ENCODE measurements at regions of chr14 and their contacts with region 1.

Region 1: GRCh38 chr14:32252030-32252670 is 49.1 kb upstream of the RNU6-8 start:
- DNase-seq: peak; percentile 53
- H3K4me3 ChIP-seq: no peak overlapping the region
- H3K27ac ChIP-seq: peak overlapping the region in 2 of 4 donors; percentile 26 to 42
- H3K4me1 ChIP-seq: peaks cover 0 to 18% (median 2%) of the 10 kb centered on the region in 4 donors
- H3K27me3 ChIP-seq: no peaks in the 10 kb centered on the region
- CTCF ChIP-seq: peak; percentile 81 to 90 (median 84)
- EP300 ChIP-seq: no peak
- POLR2A ChIP-seq: no peak

Region 2: GRCh38 chr14:31419967-31420318 is 832.2 kb before region 1 on chr14:
- in situ Hi-C with region 1: no loop called
- intact Hi-C with region 1: loop called (anchors 10 kb)
- DNase-seq: peak; percentile 84
- H3K4me3 ChIP-seq: peak overlapping the region; percentile 46 to 98 (median 90)
- H3K27ac ChIP-seq: peak overlapping the region; percentile 91 to 97 (median 94)
- H3K4me1 ChIP-seq: peaks cover 9 to 35% (median 17%) of the 10 kb centered on the region in 4 donors
- H3K27me3 ChIP-seq: no peaks in the 10 kb centered on the region
- CTCF ChIP-seq: no peak
- EP300 ChIP-seq: no peak
- POLR2A ChIP-seq: no peak

Region 3: GRCh38 chr14:31510222-31510621 is 741.9 kb before region 1 on chr14:
- in situ Hi-C with region 1: loop called (anchors 10 kb)
- intact Hi-C with region 1: no loop called
- DNase-seq: no peak
- H3K4me3 ChIP-seq: no peak overlapping the region
- H3K27ac ChIP-seq: no peak overlapping the region
- H3K4me1 ChIP-seq: no peaks in the 10 kb centered on the region
- H3K27me3 ChIP-seq: no peaks in the 10 kb centered on the region
- CTCF ChIP-seq: peak; percentile 62 to 78 (median 68)
- EP300 ChIP-seq: no peak
- POLR2A ChIP-seq: no peak

Region 4: DNA sequence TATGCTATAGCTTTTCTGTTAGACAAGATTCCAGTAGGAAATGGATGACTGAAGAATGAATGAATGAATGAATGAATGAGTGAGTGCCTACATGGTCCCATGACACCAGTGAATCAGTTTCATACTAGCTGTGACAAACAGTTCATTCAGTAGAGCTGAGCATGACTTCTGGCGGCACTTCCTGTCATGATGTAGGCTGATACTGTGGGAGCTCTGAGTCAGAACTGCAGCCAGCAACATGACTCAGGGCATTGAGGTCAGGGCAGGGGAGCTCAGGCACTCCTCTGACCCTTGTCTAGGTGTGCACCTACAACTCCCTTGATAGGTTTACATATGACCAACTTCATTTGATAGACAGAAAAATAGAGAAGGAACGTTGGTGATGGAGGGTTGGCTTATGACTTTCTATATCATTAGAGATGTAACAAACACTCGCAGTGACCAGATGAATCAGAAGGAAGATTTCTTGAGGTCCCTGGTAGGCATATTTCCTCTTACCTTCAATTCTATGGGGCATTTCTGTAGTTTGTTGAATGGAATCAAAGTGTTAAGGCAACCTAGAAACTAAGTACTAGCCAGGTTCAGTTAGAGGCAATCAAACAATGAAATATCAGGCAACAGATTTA is 314.3 kb before region 1 on chr14:
- in situ Hi-C with region 1: loop called (anchors 5 to 25 kb)
- intact Hi-C with region 1: loop called (anchors 10 kb)
- DNase-seq: peak; percentile 70
- H3K4me3 ChIP-seq: no peak overlapping the region
- H3K27ac ChIP-seq: peak overlapping the region in 2 of 4 donors; percentile 29 to 47
- H3K4me1 ChIP-seq: peaks cover 0 to 32% (median 7%) of the 10 kb centered on the region in 4 donors
- H3K27me3 ChIP-seq: no peaks in the 10 kb centered on the region
- CTCF ChIP-seq: no peak
- EP300 ChIP-seq: no peak
- POLR2A ChIP-seq: no peak

Region 5: DNA sequence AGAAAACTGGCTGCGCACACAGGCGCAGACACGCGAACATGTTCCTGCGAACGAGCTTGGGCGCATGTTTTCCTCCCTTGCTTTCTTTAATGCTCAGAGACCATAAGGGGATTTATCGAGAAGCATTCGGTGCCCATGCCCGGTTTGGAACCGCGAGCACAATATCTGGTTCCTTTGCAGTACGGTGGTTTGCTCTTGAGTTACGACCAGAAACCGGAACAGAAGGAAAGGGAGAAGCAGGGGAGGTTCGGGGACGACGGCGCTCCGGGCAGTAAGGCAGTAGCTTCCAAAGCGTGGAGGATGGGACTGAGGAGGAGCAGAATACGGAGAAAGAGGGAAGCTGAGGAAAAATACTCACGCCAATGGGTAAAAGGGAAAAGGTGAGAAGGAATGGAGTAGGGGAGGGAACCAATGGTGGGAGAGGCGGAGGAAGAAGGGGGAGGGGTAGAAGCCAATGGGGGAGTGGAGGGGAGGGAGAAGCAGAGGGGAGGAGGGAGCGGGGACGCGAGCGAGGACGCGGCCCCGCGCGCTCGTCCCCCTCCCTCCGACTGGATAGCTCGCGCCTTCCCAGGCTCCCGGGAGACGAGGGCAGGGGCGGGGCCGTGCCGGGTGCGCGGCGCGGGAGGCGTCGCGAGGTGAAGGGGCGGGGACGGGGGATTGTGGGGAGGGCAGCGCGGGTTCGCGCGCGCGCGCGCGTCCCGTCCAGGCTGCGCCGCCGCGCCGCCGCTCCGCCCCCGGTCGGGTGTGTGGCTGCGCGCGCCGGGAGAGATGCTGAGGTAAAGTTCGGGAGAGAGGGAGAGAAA is 175.7 kb before region 1 on chr14:
- in situ Hi-C with region 1: loop called (anchors 5 to 10 kb)
- intact Hi-C with region 1: no loop called
- DNase-seq: peak; percentile 97
- H3K4me3 ChIP-seq: peak overlapping the region; percentile 91 to 96 (median 95)
- H3K27ac ChIP-seq: peak overlapping the region; percentile 99 to 100 (median 99)
- H3K4me1 ChIP-seq: peaks cover 0 to 52% (median 25%) of the 10 kb centered on the region in 4 donors
- H3K27me3 ChIP-seq: no peaks in the 10 kb centered on the region
- CTCF ChIP-seq: no peak
- EP300 ChIP-seq: peak; percentile 21
- POLR2A ChIP-seq: peak; percentile 95

Region 6: DNA sequence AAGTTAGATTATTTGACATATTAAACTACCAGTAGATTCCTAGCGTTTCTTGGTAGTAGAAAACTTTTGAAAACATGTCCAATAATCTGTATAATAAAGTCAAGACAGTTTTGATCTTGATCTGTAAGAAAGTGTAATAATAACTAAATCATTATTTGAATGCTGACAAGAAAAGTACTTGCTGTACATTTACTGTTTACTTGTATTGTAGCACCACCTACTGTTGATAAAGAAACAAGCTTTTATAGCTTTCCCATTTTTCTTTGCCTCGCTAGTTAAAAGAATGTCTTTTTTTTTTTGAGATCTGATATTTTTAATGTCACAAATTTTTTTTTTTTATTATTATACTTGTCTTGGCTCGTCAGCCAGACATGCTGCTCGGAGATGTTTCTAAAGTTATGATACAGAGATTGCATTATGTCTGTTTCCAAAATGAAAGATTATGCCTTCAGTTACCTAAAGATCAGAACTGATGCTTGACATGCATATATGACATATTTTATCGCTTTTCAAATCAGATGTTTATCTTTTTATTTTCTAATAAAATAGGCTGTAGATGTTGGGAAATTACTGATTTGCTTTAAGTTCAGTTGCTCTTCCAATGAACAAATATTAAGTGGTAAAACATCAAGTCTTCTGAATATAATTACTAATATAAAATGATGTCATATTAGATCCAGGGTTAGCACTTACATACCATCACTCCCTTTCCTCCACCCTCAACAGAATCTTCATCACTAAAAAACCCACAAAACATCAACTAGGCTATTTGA is 217.4 kb after region 1 on chr14:
- in situ Hi-C with region 1: loop called in 2 of 4 experiments (anchors 10 kb)
- intact Hi-C with region 1: loop called (anchors 5 kb)
- DNase-seq: no peak
- H3K4me3 ChIP-seq: no peak overlapping the region
- H3K27ac ChIP-seq: peak overlapping the region; percentile 48 to 61 (median 52)
- H3K4me1 ChIP-seq: peaks cover 0 to 15% (median 6%) of the 10 kb centered on the region in 4 donors
- H3K27me3 ChIP-seq: no peaks in the 10 kb centered on the region
- CTCF ChIP-seq: peak; percentile 48 to 70 (median 56)
- EP300 ChIP-seq: no peak
- POLR2A ChIP-seq: no peak

Region 7: GRCh38 chr14:32560209-32560857 is 308.2 kb after region 1 on chr14:
- in situ Hi-C with region 1: loop called in 1 of 4 experiments (anchors 10 kb)
- intact Hi-C with region 1: no loop called
- DNase-seq: peak; percentile 57
- H3K4me3 ChIP-seq: no peak overlapping the region
- H3K27ac ChIP-seq: peak overlapping the region; percentile 48 to 79 (median 63)
- H3K4me1 ChIP-seq: peaks cover 3 to 18% (median 10%) of the 10 kb centered on the region in 4 donors
- H3K27me3 ChIP-seq: no peaks in the 10 kb centered on the region
- CTCF ChIP-seq: peak; percentile 83 to 92 (median 88)
- EP300 ChIP-seq: no peak
- POLR2A ChIP-seq: no peak

Measured in transverse colon (tissue), 4 donors.